Endothelial cell of umbilical vein (primary cell): ENCODE measurements at regions of chr1 and their contacts with region 1.

Region 1: DNA sequence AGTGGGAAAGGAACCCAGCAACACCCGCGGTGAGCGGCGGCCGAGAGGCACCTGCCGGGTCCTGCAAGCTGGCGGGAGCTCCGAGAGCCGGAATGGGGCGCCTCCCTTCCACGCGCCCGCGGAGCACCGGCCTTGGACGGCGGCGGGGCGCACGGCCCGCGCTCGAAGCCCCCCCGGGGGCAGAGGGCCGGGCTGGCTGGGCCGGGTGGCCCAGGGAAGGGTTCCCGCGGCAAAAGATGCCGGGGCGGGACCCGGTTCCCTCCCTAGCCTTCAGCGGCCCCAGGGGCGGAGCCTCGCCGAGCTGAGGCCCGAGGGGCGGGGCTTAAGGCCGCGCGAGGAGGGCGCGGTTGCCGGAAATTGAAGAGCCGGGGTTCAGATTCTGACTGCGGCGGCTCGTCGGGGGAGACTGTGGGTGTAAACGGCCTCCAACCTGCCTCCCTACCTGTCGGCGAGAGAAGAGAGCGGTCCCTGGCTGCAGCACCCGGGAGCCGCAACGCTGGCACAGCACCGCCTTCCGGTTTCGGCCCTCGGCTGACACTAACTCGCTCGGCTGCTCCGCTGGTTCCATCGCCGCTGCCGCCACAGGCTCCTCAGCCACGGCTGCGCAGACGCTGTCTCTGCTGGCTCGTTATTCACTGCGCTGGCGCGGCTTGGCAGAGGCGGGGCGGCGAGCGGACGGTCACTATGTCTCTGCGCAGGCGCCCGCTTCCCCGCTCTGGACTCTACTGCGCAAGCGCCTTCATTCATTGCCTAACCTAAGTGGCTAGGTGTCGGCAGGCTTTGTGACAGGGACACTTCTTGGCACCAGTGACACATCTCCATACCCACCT is at the start of gene RABIF:
- DNase-seq: peak; percentile 97
- H3K4me3 ChIP-seq: peak within 1 kb of the TSS; percentile 79 to 96 (median 90)
- H3K27ac ChIP-seq: peak within 1 kb of the TSS; percentile 18
- H3K4me1 ChIP-seq: peaks cover 10% of the 10 kb centered on the region
- H3K27me3 ChIP-seq: no peaks in the 10 kb centered on the region
- CTCF ChIP-seq: no peak
- POLR2A ChIP-seq: peak; percentile 93
- total RNA-seq, gene RABIF: 13.1 and 15.8 TPM in 2 replicates

Region 2: DNA sequence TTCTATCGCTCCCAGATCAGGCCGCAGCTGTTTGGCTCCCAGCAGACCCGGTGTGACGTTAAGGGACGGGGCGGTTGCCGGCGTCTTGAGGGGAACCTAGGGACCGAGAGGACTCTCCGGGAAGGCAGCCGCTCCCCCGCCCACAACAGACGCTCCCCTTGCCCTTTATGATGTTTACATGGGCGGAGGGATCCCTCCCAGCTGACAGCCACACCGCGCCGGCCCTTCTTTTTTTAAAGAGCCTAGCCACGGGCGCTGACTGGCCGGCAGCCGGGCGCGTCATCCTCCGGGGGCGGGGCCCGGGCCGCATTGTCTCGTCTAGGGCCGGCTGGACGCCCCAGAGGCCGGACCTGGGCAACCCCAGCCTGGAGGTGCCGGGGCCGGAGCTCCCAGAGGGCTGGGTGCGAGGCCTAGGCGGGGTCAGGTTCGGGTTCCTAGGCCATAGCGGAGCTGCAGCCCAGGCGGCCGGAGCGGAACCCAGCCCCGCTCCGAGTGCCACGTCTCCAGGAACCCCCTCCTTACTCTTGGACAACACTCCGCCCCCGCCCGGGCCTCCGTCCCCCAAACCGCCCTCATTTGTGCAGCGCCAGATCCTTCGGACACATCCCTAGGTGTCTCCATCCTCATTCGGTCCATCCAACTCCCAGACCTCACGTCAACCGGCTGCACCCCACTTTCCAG is 78.0 kb before region 1 on chr1 and contains the start of gene PCAT6:
- CTCF ChIA-PET with region 1: interaction called, 3 read pairs
- POLR2A ChIA-PET with region 1: no interaction called
- dilution Hi-C with region 1: no loop called
- intact Hi-C with region 1: loop called (anchors 1 kb)
- DNase-seq: peak; percentile 92
- H3K4me3 ChIP-seq: peak within 1 kb of the TSS; percentile 58 to 81 (median 60)
- H3K27ac ChIP-seq: peak within 1 kb of the TSS; percentile 46
- H3K4me1 ChIP-seq: peaks cover 13% of the 10 kb centered on the region
- H3K27me3 ChIP-seq: peaks cover 9 to 10% of the 10 kb centered on the region in 2 experiments
- CTCF ChIP-seq: no peak
- POLR2A ChIP-seq: peak; percentile 90
- total RNA-seq, gene PCAT6: 1.5 and 1.7 TPM in 2 replicates

Region 3: DNA sequence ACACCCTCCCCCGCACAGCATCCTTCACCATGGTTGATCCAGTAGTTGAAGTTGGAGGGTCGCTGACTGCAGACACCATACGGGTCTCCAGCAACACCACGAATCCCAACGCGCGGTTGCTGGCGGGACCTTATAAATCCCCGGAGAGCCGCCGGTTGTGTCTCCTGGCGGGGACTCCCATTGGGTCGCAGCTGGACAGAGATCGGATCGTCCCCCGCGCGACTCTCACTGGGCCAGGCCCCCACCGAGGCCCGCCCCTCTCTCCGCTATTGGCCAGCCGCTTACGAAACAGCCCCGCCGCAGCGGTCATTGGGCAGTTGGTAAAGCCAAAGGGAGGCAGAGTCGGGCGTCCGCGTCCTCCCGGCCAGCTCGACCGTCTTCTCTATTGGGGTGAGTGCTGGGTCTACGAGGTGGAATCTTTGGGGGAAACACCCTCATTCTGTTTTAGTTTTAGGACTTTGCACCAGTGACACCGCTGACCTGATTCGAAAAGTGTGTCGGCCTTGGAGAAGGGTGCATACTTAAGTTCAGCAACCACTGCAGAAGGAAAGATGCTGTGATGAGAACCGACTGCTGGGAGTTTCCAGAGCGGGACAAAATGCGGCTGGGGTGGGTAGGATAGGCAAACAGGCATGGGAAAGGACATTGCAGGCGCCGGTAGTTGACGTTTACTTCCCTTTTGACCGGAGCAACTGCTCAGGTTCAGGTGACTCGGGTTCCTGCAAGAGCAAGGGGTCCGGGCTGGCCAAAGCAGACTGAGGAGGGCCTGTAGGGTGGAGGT is 27.1 kb before region 1 on chr1:
- CTCF ChIA-PET with region 1: interaction called, 5 read pairs
- POLR2A ChIA-PET with region 1: no interaction called
- dilution Hi-C with region 1: no loop called
- intact Hi-C with region 1: loop called (anchors 1 kb)
- DNase-seq: peak; percentile 93
- H3K4me3 ChIP-seq: peak overlapping the region; percentile 63 to 88 (median 70)
- H3K27ac ChIP-seq: no peak overlapping the region
- H3K4me1 ChIP-seq: peaks cover 10% of the 10 kb centered on the region
- H3K27me3 ChIP-seq: peaks cover 3 to 5% of the 10 kb centered on the region in 2 experiments
- CTCF ChIP-seq: no peak
- POLR2A ChIP-seq: no peak

Region 4: DNA sequence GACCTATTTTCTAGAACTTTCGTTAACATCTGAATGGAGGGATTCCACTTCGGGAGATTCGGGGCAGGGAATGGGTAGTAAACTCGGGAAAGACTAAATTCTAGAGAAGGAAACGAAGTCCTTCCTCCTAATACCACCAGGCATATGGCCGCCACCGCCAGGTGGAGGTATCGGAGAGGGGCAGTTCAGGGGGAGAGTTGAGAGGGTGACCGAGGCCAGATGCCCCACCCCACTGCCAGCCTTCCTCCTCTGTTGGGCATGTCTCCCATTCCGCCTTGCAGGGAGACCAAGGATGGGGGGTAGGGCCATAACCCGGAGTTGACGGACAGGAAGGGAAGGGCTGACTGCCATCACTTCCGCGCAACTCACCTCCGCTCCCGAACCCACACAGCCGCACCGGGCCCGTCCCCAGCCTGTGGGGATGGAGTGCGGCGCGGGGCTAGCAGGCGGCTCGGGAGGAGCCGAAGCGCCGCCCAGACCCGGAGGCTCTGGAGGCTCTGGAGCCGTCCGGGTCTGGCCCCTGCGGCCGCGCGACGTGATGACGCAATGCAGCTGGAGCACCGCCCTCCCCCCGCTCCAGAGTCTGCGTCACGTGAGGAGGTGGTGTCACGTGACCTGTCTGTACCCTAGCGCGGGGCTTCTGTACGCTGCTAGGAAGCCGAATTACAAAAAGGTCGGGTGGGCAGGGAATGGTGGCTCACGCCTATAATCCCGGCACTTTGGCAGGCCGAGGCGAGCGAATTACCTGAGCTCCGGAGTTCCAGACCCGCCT is 38.2 kb after region 1 on chr1 and contains the start of gene KLHL12:
- CTCF ChIA-PET with region 1: no interaction called
- POLR2A ChIA-PET with region 1: no interaction called
- dilution Hi-C with region 1: no loop called
- intact Hi-C with region 1: loop called (anchors 1 kb)
- DNase-seq: peak; percentile 97
- H3K4me3 ChIP-seq: peak within 1 kb of the TSS; percentile 33 to 99 (median 88)
- H3K27ac ChIP-seq: peak within 1 kb of the TSS; percentile 70
- H3K4me1 ChIP-seq: peaks cover 2% of the 10 kb centered on the region
- H3K27me3 ChIP-seq: no peaks in the 10 kb centered on the region
- CTCF ChIP-seq: peak; percentile 50 to 61
- POLR2A ChIP-seq: peak; percentile 93
- total RNA-seq, gene KLHL12: 22.8 and 25.2 TPM in 2 replicates

Region 5: GRCh38 chr1:202957733-202958543 is 69.2 kb after region 1 on chr1 and contains the start of gene ADIPOR1:
- CTCF ChIA-PET with region 1: no interaction called
- POLR2A ChIA-PET with region 1: no interaction called
- dilution Hi-C with region 1: no loop called
- intact Hi-C with region 1: loop called (anchors 2 kb)
- DNase-seq: peak; percentile 85
- H3K4me3 ChIP-seq: peak within 1 kb of the TSS; percentile 79 to 99 (median 81)
- H3K27ac ChIP-seq: peak within 1 kb of the TSS; percentile 86
- H3K4me1 ChIP-seq: peaks cover 22% of the 10 kb centered on the region
- H3K27me3 ChIP-seq: no peaks in the 10 kb centered on the region
- CTCF ChIP-seq: no peak
- POLR2A ChIP-seq: peak; percentile 87
- total RNA-seq, gene ADIPOR1: 66.9 and 67.2 TPM in 2 replicates

Region 6: DNA sequence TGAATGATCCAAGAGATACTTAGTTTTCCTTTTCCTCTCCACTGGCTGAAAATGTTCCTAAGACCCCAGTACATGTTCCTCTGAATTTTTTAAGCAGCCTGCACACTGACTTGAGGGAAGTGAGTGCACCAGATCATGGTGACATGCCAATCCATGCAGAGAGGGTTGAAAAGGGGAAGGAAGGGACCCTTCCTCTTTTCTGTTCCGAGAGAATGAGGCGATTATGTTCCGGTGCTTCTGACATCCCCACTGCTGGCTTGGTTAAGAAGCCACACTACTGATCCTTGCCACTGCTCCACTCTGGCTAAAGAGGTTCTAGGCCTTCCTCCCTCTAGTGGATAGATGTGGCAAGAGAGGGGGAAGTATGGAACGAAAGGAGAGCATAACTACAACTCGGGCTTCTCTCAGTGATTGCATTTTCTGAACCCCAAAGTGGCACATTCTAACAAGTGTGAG is 80.1 kb after region 1 on chr1:
- CTCF ChIA-PET with region 1: no interaction called
- POLR2A ChIA-PET with region 1: no interaction called
- dilution Hi-C with region 1: no loop called
- intact Hi-C with region 1: loop called (anchors 2 kb)
- DNase-seq: peak; percentile 62
- H3K4me3 ChIP-seq: no peak overlapping the region
- H3K27ac ChIP-seq: no peak overlapping the region
- H3K4me1 ChIP-seq: peaks cover 19% of the 10 kb centered on the region
- H3K27me3 ChIP-seq: peaks cover 0 to 9% of the 10 kb centered on the region in 2 experiments
- CTCF ChIP-seq: peak; percentile 68 to 73
- POLR2A ChIP-seq: no peak

Region 7: DNA sequence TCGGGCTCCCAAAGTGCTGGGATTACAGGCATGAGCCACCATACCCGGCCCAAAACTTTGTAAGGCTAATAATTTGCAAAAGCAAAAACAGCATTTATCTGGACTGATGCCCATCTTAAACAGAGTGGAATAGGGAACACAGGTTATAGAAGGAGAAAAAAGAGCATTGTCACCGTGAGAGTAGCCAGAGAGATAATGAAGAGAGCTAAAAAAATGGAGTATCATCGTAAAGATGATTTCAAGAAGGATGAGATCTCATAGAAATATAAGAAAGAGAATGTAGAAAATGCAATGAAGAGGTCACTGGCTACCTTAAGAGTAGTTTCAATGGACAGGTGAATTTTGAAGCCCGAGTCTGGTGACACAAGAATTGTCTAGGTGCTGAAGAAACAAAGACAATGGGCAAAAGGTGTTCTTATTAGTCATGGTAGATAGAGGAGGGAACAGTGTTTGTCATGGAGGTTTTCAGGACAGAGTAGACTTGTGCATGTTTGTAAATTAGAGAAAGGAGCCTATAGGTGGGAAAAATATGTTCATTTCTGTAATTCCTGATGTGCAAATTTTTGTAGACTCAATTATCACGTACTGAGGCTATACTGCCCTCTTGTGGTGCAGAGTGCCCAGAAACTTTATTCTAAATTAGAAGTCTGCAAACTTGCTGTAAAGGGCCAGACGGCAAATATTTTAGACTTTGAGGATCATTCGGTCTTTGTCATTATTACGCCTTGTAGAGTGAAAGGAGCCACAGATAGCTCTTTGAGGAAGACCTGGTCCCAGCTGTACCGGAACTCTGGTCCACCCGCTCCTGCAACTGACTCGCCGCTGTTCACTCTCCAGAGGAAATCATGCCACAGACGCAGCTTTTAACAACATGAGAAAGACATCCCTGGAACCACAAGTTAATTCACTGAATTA is 110.3 kb after region 1 on chr1:
- CTCF ChIA-PET with region 1: no interaction called
- POLR2A ChIA-PET with region 1: no interaction called
- dilution Hi-C with region 1: no loop called
- intact Hi-C with region 1: loop called (anchors 10 kb)
- DNase-seq: peak; percentile 69
- H3K4me3 ChIP-seq: no peak overlapping the region
- H3K27ac ChIP-seq: no peak overlapping the region
- H3K4me1 ChIP-seq: peaks cover 5% of the 10 kb centered on the region
- H3K27me3 ChIP-seq: peaks cover 16 to 27% of the 10 kb centered on the region in 2 experiments
- CTCF ChIP-seq: peak; percentile 66 to 72
- POLR2A ChIP-seq: no peak